Heart left ventricle (tissue), 16 donors: ENCODE measurements at regions of chr4 and their contacts with region 1.

Region 1: GRCh38 chr4:147933316-147933715 is 201.4 kb downstream of the ARHGAP10 start:
- DNase-seq: no peak
- ATAC-seq: peak in 3 of 4 donors; percentile 44 to 66 (median 54)
- H3K4me3 ChIP-seq: no peak overlapping the region
- H3K27ac ChIP-seq: no peak overlapping the region
- H3K4me1 ChIP-seq: peaks cover 0 to 15% (median 0%) of the 10 kb centered on the region in 12 donors
- H3K27me3 ChIP-seq: no peaks in the 10 kb centered on the region
- CTCF ChIP-seq: peak in 6 of 12 donors; percentile 12 to 47 (median 33)
- POLR2A ChIP-seq: no peak

Region 2: DNA sequence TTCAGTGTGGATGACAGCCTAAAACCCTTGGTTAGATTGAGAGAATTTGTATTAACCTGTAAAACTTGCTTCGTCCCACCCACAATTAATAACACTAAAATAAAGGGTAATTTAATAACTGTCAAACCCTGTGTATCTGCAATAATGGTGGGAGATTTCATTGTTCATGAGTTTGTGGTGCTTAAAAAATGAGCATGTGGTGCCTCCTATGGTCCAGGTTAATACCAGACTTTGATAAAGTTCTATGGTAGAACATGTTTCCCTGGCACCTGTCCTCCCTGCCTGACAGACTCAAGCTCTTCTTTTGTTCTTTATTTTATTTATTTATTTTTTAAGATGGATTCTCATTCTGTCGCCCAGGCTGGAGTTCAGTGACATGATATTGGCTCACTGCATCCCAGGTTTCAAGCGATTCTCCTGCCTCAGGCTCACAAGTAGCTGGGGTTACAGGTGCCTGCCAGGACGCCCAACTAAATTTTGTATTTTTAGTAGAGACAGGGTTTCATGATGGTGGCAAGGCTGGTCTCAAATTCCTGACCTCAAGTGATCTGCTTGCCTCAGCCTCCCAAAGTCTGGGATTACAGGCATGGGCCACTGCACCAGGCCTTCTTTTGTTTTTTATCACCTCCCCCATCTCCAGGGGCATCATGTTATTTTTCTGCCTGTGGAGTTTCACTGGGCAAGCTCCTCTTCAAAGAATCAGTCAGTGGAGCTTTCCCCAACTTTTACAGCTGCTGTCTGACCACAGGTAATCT is 219.7 kb after region 1 on chr4:
- intact Hi-C with region 1: loop called in 1 of 10 experiments (anchors 10 kb)
- DNase-seq: no peak
- ATAC-seq: no peak
- H3K4me3 ChIP-seq: no peak overlapping the region
- H3K27ac ChIP-seq: no peak overlapping the region
- H3K4me1 ChIP-seq: no peaks in the 10 kb centered on the region
- H3K27me3 ChIP-seq: no peaks in the 10 kb centered on the region
- CTCF ChIP-seq: peak in 1 of 12 donors; percentile 11
- POLR2A ChIP-seq: no peak